Heart left ventricle (tissue), 16 donors: ENCODE measurements at regions of chr6 and their contacts with region 1.

Region 1: DNA sequence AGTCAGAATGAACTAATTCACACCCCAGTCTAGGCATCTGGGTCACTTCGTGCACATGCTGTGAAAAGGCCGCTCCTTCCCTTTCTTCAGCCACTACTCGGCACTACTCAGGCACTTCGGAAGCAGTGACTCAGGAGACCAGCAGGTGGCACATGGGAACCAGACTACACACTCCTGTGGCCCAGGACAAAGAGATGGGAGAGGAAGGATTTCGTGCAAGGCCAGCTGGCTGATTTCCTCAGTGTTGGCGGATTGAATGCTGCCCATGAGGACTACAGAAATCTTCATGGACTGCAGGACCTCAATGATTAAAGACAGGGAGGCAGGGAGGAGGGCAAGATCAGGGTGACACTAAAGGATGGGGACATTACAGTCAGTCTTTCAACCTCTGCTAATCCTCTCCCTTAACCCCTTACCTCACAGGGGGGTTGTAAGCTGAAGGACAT is 117.8 kb upstream of the SPACA1 start:
- DNase-seq: peak; percentile 71 to 81 (median 77)
- ATAC-seq: peak; percentile 92 to 99 (median 98)
- H3K4me3 ChIP-seq: no peak overlapping the region
- H3K27ac ChIP-seq: no peak overlapping the region
- H3K4me1 ChIP-seq: peaks cover 0 to 10% (median 0%) of the 10 kb centered on the region in 12 donors
- H3K27me3 ChIP-seq: no peaks in the 10 kb centered on the region
- CTCF ChIP-seq: peak; percentile 59 to 87 (median 74)
- POLR2A ChIP-seq: no peak

Region 2: GRCh38 chr6:87742106-87742505 is 187.8 kb before region 1 on chr6:
- intact Hi-C with region 1: no loop called
- DNase-seq: no peak
- ATAC-seq: no peak
- H3K4me3 ChIP-seq: no peak overlapping the region
- H3K27ac ChIP-seq: peak overlapping the region in 1 of 12 donors; percentile 69
- H3K4me1 ChIP-seq: peaks cover 0 to 27% (median 0%) of the 10 kb centered on the region in 12 donors
- H3K27me3 ChIP-seq: no peaks in the 10 kb centered on the region
- CTCF ChIP-seq: no peak
- POLR2A ChIP-seq: no peak

Region 3: GRCh38 chr6:88492824-88493223 is 563.0 kb after region 1 on chr6:
- intact Hi-C with region 1: loop called in 8 of 10 experiments (anchors 2 to 10 kb)
- DNase-seq: no peak
- ATAC-seq: peak in 1 of 4 donors; percentile 47
- H3K4me3 ChIP-seq: no peak overlapping the region
- H3K27ac ChIP-seq: no peak overlapping the region
- H3K4me1 ChIP-seq: peaks cover 0 to 6% (median 0%) of the 10 kb centered on the region in 12 donors
- H3K27me3 ChIP-seq: no peaks in the 10 kb centered on the region
- CTCF ChIP-seq: peak in 11 of 12 donors; percentile 6 to 54 (median 37)
- POLR2A ChIP-seq: no peak

Region 4: DNA sequence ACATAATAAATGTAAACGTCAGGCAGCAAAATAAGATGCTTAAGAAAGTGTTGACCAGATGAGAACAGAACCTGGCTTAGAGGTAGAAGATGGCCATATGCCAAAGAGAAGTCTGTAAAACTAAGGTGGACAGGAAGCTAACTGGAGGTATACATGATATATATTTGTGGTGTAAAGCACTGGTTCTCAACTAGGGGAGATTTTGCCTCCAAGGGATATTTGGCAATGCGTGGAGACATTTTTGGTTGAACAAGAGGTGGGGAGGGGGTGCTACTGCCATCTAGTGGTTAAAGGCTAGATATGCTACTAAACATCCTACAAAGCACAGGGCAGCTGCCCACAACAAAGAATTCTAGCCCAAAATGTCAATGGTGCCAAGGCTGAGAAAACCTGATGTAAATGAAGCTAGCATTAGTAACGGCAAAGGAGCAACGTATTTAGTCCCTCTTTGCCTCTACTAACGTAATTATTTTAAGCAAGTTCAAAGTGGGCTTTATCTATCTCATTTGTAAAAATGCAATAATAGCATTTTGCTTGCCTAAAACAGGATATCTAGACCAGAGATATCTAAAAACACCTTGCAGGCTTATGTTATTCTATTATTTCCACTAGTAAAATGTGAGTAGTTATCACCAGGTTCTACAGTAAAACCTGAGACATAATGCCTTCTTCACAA is 851.0 kb after region 1 on chr6:
- intact Hi-C with region 1: loop called in 6 of 10 experiments (anchors 2 to 10 kb)
- DNase-seq: peak in 4 of 5 donors; percentile 23 to 36 (median 27)
- ATAC-seq: peak in 3 of 4 donors; percentile 38 to 56 (median 44)
- H3K4me3 ChIP-seq: no peak overlapping the region
- H3K27ac ChIP-seq: no peak overlapping the region
- H3K4me1 ChIP-seq: peaks cover 0 to 2% (median 0%) of the 10 kb centered on the region in 12 donors
- H3K27me3 ChIP-seq: no peaks in the 10 kb centered on the region
- CTCF ChIP-seq: peak; percentile 74 to 95 (median 86)
- POLR2A ChIP-seq: no peak

Region 5: DNA sequence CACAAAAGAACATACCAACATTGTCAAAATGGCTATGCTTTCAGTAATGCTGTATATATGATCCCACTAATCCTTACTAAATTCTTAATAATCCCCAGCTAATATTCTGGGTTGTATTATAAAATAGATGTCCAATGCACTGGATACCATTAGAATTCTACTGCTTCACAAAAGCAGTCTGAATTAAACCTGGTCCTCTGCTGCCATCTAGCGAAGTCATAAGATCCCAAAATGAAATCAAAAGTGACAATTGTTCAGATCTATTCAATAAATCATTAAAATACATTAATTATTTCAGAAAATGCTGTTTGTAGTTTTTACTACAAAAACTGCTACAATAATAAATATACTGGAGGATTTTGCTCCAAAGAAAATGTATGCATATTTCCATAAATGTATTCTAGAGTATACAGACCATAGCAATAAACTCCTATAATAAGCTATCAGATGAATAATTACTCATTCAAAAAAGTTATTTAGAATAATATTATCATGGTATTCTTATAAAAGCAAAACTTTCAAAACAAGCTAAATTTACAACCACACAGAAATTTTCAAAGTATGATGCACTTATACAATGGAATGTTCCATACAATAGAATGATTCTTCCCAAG is 941.0 kb after region 1 on chr6:
- intact Hi-C with region 1: loop called (anchors 2 to 5 kb)
- DNase-seq: peak in 2 of 5 donors; percentile 26 to 32
- ATAC-seq: peak in 1 of 4 donors; percentile 39
- H3K4me3 ChIP-seq: no peak overlapping the region
- H3K27ac ChIP-seq: no peak overlapping the region
- H3K4me1 ChIP-seq: peaks cover 0 to 16% (median 0%) of the 10 kb centered on the region in 12 donors
- H3K27me3 ChIP-seq: no peaks in the 10 kb centered on the region
- CTCF ChIP-seq: peak; percentile 50 to 82 (median 67)
- POLR2A ChIP-seq: no peak